Prostate gland (tissue), 2 donors: ENCODE measurements at regions of chr20 and their contacts with region 1.

Region 1: GRCh38 chr20:36605399-36606157 is at the start of gene RAB5IF:
- DNase-seq: peak; percentile 97
- H3K4me3 ChIP-seq: peak within 1 kb of the TSS; percentile 95 to 96
- H3K27ac ChIP-seq: peak within 1 kb of the TSS; percentile 77 to 78
- H3K4me1 ChIP-seq: peaks cover 6% of the 10 kb centered on the region
- H3K27me3 ChIP-seq: no peaks in the 10 kb centered on the region
- CTCF ChIP-seq: peak; percentile 78 to 100 (median 97)
- POLR2A ChIP-seq: peak; percentile 79
- total RNA-seq, gene RAB5IF: 72.8 to 92.3 TPM

Region 2: DNA sequence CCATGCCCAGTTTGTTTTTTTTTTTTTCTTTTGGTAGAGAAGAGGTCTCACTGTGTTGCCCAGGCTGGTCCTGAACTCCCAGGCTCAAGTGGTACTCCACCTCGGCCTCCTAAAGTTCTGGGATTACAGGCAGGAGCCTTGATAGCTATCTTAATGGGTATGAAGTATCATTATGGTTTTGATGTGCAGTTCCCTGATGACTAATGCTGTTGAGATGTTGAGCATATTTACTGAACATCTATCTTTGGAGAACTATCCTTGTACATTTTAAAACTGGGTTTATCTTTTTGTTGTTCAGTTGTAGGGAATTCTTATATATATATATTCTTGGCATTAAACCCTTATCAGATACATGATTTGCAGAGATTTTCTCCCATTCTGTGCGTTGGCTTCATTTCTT is 85.6 kb before region 1 on chr20:
- intact Hi-C with region 1: no loop called
- DNase-seq: no peak
- H3K4me3 ChIP-seq: no peak overlapping the region
- H3K27ac ChIP-seq: no peak overlapping the region
- H3K4me1 ChIP-seq: no peaks in the 10 kb centered on the region
- H3K27me3 ChIP-seq: no peaks in the 10 kb centered on the region
- CTCF ChIP-seq: no peak
- POLR2A ChIP-seq: no peak

Region 3: GRCh38 chr20:36573103-36573794 is 32.3 kb before region 1 on chr20 and contains the start of gene TGIF2:
- intact Hi-C with region 1: loop called (anchors 5 kb)
- DNase-seq: peak; percentile 81
- H3K4me3 ChIP-seq: peak within 1 kb of the TSS; percentile 75 to 88
- H3K27ac ChIP-seq: peak within 1 kb of the TSS; percentile 92 to 94
- H3K4me1 ChIP-seq: peaks cover 2% of the 10 kb centered on the region
- H3K27me3 ChIP-seq: no peaks in the 10 kb centered on the region
- CTCF ChIP-seq: no peak
- POLR2A ChIP-seq: peak; percentile 70
- total RNA-seq, gene TGIF2: 16.7 to 34.8 TPM

Region 4: GRCh38 chr20:36745927-36746659 is 140.5 kb after region 1 on chr20 and contains the start of gene NDRG3:
- intact Hi-C with region 1: loop called (anchors 2 kb)
- DNase-seq: peak; percentile 94
- H3K4me3 ChIP-seq: peak within 1 kb of the TSS; percentile 96 to 98
- H3K27ac ChIP-seq: peak within 1 kb of the TSS; percentile 79 to 81
- H3K4me1 ChIP-seq: peaks cover 3% of the 10 kb centered on the region
- H3K27me3 ChIP-seq: no peaks in the 10 kb centered on the region
- CTCF ChIP-seq: peak in 1 of 4 experiments; percentile 38
- POLR2A ChIP-seq: no peak
- total RNA-seq, gene NDRG3: 42.8 to 127 TPM